MCF 10A (cell line): ENCODE measurements at regions of chr1 and their contacts with region 1.

Region 1: GRCh38 chr1:211578640-211579433 is at the start of gene SLC30A1:
- DNase-seq: peak; percentile 100
- H3K4me3 Mint-ChIP-seq: peak within 1 kb of the TSS; percentile 89
- H3K27ac Mint-ChIP-seq: peak within 1 kb of the TSS; percentile 96
- H3K4me1 Mint-ChIP-seq: peaks cover 48% of the 10 kb centered on the region
- H3K27me3 Mint-ChIP-seq: no peaks in the 10 kb centered on the region
- CTCF ChIP-seq: no peak
- total RNA-seq, gene SLC30A1: 87.0 and 94.1 TPM in 2 replicates

Region 2: DNA sequence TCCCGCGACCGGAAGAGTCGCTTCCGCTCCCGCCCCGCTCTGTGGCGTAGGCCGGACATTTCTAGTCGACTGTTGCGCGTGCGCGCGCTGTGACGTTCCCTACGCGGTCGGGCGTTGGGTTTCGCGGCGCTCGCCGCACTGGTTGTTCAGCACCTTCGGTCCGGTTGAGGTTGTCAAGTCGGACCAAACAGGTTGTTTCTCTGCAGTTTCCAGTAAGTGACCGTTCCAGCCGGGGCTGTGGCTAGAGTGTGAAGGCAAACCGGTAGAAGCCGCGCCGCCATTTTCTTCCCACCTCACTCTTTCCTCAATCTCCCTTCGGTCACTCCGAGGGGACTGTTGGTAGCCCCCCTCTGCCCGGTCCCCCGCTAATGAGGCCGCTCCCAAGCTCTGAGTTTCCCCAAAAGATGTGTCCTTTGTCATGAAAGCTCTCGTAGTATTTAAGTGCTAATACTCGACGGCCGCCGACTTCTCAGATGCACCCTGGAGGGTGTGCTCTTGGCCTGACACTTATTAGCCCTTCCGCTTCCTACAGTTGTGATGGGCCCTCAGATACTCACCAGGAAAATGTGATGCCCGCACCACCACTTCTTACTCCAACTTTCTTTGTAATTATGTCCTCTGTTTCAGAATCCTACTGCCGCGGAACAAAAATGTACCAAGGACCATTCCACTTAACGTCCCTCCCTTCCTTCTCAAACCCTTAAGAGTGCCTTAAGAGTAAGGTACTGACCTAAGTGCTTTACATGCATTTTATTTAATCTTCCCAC is 195.9 kb before region 1 on chr1:
- CTCF ChIA-PET with region 1: interaction called, 3 read pairs
- POLR2A ChIA-PET with region 1: interaction called, 9 read pairs
- intact Hi-C with region 1: loop called (anchors 5 kb)
- DNase-seq: peak; percentile 99
- H3K4me3 Mint-ChIP-seq: peak overlapping the region; percentile 82
- H3K27ac Mint-ChIP-seq: peak overlapping the region; percentile 98
- H3K4me1 Mint-ChIP-seq: peaks cover 26% of the 10 kb centered on the region
- H3K27me3 Mint-ChIP-seq: no peaks in the 10 kb centered on the region
- CTCF ChIP-seq: no peak

Region 3: GRCh38 chr1:211551628-211552460 is 27.0 kb before region 1 on chr1:
- CTCF ChIA-PET with region 1: no interaction called
- POLR2A ChIA-PET with region 1: interaction called, 21 read pairs
- intact Hi-C with region 1: no loop called
- DNase-seq: peak; percentile 97
- H3K4me3 Mint-ChIP-seq: peak overlapping the region; percentile 36
- H3K27ac Mint-ChIP-seq: peak overlapping the region; percentile 65
- H3K4me1 Mint-ChIP-seq: peaks cover 21% of the 10 kb centered on the region
- H3K27me3 Mint-ChIP-seq: no peaks in the 10 kb centered on the region
- CTCF ChIP-seq: no peak

Region 4: GRCh38 chr1:211606914-211607755 is 28.3 kb after region 1 on chr1:
- CTCF ChIA-PET with region 1: interaction called, 7 read pairs
- POLR2A ChIA-PET with region 1: interaction called, 60 read pairs
- intact Hi-C with region 1: no loop called
- DNase-seq: peak; percentile 73
- H3K4me3 Mint-ChIP-seq: no peak overlapping the region
- H3K27ac Mint-ChIP-seq: no peak overlapping the region
- H3K4me1 Mint-ChIP-seq: peaks cover 40% of the 10 kb centered on the region
- H3K27me3 Mint-ChIP-seq: no peaks in the 10 kb centered on the region
- CTCF ChIP-seq: no peak

Region 5: GRCh38 chr1:211619033-211619996 is 40.5 kb after region 1 on chr1:
- CTCF ChIA-PET with region 1: interaction called, 3 read pairs
- POLR2A ChIA-PET with region 1: interaction called, 28 read pairs
- intact Hi-C with region 1: no loop called
- DNase-seq: no peak
- H3K4me3 Mint-ChIP-seq: no peak overlapping the region
- H3K27ac Mint-ChIP-seq: no peak overlapping the region
- H3K4me1 Mint-ChIP-seq: peaks cover 5% of the 10 kb centered on the region
- H3K27me3 Mint-ChIP-seq: no peaks in the 10 kb centered on the region
- CTCF ChIP-seq: no peak

Region 6: DNA sequence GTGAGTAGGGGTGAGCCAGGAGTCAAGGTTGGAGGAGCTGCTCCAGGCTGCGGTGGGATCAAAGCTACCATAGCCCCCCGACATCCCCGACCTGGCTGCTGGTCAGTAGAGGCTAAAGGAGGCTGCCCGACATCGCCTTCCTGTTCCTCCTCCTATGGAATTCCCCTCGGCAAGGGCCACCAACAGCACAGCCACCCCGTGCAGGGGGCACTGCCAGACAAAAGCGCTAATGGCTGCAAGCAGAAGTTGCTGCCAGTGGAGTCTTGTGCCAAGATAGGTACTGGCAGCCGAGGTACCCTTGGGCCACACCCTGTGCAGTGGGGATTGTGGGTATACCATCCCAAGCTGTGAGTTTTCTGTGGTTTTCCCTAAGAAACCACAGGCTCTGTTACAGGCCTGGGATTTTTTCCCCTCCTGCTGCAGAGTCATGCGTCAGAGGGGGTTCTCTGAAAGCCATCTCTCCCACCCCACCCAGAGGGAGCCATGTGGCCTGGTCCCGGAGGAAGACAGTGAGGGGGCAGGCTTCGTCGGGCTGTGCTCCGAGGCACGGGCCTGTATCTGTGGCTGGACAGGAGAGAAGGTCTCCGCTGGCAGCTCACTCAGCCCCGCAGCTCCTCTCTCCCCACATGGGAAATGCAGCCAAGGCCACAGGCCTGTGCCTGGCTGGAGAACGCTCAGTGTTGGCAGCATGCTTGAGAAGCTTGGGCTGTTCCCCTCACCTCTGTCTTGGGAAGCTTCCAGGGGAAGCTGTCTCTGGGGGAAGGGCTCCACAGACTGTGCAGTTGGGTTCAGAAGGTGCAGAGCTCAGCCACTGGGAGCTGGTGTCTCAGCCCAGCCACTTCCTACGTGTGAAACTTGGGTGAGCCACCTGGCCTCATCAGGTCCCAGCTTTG is 54.0 kb after region 1 on chr1:
- CTCF ChIA-PET with region 1: interaction called, 12 read pairs
- POLR2A ChIA-PET with region 1: interaction called, 423 read pairs
- intact Hi-C with region 1: no loop called
- DNase-seq: peak; percentile 98
- H3K4me3 Mint-ChIP-seq: peak overlapping the region; percentile 45
- H3K27ac Mint-ChIP-seq: peak overlapping the region; percentile 84
- H3K4me1 Mint-ChIP-seq: peaks cover 45% of the 10 kb centered on the region
- H3K27me3 Mint-ChIP-seq: no peaks in the 10 kb centered on the region
- CTCF ChIP-seq: no peak

Region 7: DNA sequence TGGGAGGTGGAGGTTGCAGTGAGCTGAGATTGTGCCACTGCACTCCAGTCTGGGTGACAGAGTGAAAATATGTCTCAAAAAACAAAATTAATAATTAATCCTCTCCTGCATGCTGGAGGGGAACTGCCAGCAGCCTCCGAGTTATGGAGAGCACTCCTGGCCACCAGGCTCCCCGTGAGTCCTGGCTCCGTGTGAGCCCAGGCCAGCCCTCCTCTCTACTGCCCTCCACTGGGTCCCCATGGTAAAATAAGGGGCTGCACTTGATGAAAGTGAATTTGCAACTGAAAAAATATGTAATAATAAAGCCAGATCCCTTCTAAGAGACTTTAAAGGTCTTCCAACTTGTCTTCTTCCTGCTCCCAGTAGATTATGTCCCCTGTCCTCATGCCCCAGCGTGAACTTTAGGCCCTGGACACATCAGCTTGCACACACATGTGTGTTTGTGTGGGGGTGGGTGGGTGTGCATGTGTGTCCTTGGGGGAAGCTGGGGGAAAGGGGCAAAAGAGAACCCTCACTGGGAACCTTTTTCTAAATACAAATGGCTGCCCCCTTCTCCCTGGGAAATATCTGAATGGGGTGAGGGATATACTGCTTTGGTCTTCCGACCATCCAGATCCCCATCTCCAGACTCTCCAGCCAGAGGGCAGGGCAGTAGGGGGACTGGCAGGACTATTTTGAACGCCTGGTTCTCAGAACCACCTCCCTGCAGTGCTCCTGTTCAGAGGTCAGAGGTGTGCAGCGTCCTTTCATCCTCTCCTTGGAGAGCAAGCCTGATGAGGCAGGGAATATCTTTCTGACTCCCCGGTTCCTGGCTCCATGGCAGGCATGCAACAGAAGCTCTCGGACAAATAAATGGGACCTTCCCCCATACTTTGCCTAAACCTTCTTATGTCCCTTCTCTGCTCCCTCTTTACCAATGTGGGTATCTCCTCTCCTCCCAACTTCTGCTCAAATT is 70.4 kb after region 1 on chr1:
- CTCF ChIA-PET with region 1: interaction called, 62 read pairs
- POLR2A ChIA-PET with region 1: interaction called, 423 read pairs
- intact Hi-C with region 1: no loop called
- DNase-seq: no peak
- H3K4me3 Mint-ChIP-seq: no peak overlapping the region
- H3K27ac Mint-ChIP-seq: peak overlapping the region; percentile 1
- H3K4me1 Mint-ChIP-seq: peaks cover 37% of the 10 kb centered on the region
- H3K27me3 Mint-ChIP-seq: no peaks in the 10 kb centered on the region
- CTCF ChIP-seq: peak; percentile 22